Activated naive CD4-positive, alpha-beta T cell treated with anti-CD3 and anti-CD28 coated beads for 36 hours (primary cell): ENCODE measurements at regions of chr12 and their contacts with region 1.

Region 1: DNA sequence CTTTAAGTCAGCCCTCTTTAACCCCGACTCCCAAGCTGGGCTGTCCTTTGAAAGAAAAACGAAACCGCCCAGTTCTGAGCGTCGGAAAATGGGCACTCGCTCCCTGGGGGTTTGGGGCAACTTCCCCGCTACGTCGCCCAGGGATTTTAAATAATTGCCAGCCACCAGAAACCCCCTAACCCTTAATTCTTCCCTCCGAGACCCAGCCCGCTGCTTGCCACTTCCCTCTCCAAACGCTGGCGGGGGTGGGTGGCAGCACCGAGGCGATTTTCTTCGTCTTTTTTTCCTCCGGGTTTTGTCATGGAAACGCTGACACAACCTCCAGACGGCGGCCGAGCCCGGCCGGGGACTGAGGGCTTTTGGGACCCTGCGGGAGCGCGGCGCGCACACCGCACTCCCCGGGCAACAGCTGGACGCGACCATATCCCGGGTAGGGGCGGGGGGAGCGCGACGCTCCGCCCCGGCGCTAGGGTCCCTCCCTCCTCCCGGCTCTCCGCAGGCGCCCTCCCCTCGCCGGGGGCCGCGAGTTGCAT is at the start of gene CHST11:
- DNase-seq: peak; percentile 86
- H3K4me3 Mint-ChIP-seq: peak within 1 kb of the TSS; percentile 97
- H3K27ac Mint-ChIP-seq: peak within 1 kb of the TSS; percentile 94
- H3K4me1 Mint-ChIP-seq: peaks cover 28% of the 10 kb centered on the region
- H3K27me3 Mint-ChIP-seq: peaks cover 2% of the 10 kb centered on the region
- total RNA-seq, gene CHST11: 39.3 to 45.3 TPM

Region 2: DNA sequence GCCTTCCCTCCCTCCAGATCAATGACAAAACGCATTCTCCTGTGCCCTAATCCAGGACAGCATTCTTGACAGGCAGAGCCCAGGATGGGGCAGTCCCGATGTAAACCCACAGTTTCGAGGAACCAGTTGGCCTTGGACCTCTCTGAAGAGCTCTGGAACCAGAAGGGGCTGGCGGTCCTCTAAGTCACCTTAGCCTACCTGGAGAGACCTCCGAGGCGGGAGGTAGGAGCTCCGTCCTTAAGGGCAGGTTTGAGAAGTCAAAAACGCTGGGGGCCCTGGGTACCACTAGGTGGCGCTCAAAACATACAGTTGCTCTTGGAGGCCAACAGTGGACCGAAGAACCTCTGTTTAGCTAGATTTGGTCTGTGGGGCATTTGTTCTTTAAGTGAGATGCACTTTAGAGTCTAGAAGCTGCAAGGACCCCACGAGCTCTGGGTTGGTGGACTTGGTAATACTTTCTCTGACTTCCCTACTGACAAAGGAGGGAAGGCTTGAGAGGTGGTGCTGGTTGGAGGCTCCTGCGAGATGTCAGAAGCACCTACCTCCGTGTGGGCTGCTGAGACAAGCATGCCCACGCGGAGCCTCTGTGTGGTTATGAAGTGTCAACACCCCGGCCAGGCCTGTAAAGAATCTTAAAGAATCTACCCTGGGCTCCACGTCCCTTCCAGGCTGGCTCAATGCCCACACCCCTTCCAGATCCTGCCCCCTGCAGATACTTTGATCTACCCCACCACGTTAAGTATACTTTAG is 74.6 kb before region 1 on chr12:
- CTCF ChIA-PET with region 1: interaction called, 6 read pairs
- intact Hi-C with region 1: loop called (anchors 1 kb)
- DNase-seq: peak; percentile 91
- H3K4me3 Mint-ChIP-seq: no peak overlapping the region
- H3K27ac Mint-ChIP-seq: no peak overlapping the region
- H3K4me1 Mint-ChIP-seq: peaks cover 10% of the 10 kb centered on the region
- H3K27me3 Mint-ChIP-seq: no peaks in the 10 kb centered on the region

Region 3: GRCh38 chr12:104427011-104427461 is 29.4 kb before region 1 on chr12:
- CTCF ChIA-PET with region 1: no interaction called
- intact Hi-C with region 1: no loop called
- DNase-seq: no peak
- H3K4me3 Mint-ChIP-seq: no peak overlapping the region
- H3K27ac Mint-ChIP-seq: no peak overlapping the region
- H3K4me1 Mint-ChIP-seq: peaks cover 4% of the 10 kb centered on the region
- H3K27me3 Mint-ChIP-seq: no peaks in the 10 kb centered on the region

Region 4: DNA sequence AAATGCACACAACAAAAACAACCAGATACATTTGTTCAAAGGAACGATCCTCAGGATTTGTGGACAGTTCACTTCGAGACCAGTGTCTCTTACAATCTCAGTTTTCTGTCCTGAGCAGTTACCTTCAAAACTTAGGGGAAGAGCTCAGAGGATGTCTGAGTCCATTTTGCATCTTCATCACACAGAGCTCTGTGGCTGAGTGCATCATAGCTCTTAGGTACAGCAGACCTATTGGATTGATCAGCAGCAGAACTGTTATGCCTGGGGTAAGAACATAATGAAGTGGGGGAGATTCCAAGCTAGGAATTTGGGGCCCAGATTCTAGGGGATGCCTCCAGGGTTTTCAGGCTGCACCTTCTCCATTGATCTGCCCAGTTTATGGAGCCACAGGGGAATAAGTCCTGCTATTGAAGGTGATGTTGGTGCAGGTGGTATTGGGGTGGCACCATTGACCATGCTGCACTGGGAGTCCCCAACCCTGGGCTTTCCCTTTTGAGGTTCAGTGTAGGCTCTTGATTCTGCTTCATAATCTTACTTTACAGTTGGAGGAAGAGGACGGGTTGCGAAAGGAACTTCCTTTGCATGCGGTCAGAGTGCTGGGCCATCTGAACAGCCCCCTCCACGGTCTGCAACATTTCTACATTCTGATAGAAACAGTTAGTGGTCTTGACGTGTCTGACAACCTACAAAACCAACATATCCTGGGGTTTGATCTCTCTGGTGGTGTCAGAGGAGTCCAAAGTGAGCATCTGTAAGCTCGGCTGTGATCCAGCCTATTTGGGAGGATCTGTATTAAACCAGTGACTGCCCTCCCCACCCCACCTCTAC is 113.1 kb after region 1 on chr12:
- CTCF ChIA-PET with region 1: interaction called, 3 read pairs
- intact Hi-C with region 1: loop called (anchors 1 kb)
- DNase-seq: peak; percentile 64
- H3K4me3 Mint-ChIP-seq: no peak overlapping the region
- H3K27ac Mint-ChIP-seq: peak overlapping the region; percentile 17
- H3K4me1 Mint-ChIP-seq: peaks cover 49% of the 10 kb centered on the region
- H3K27me3 Mint-ChIP-seq: no peaks in the 10 kb centered on the region

Region 5: DNA sequence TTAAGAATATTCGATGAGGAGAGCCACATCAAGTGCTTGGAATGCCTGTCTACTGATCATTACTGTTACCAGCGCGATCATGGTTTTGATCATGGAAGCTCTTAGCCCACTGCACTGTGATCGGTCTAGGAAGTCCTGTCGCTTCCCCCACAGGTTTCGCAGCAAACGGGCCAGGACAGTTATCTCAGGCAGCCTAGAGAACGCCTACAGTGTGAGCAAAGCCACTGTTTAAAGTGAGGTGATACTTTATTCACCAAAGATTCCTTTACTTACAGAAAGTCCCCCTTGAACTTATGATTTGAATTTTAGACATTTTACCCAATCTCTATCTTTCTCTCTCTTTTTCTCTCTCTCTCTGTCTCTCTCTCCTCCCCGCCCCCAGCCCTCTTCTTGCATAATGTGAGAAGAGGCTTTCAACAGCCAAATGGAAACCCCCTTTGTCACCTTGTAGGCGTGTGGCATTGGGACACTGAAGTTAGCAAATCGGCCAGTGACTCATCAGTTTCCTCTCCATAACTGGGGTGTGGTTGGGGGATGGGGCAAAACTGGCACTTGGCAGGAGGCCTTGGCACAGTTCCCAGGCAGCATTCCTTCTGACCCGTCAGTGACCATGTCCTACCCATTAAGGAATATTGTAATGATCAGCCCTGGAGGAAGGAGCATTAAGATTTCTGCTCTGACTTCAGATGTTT is 215.1 kb after region 1 on chr12:
- CTCF ChIA-PET with region 1: interaction called, 9 read pairs
- intact Hi-C with region 1: loop called (anchors 1 kb)
- DNase-seq: peak; percentile 98
- H3K4me3 Mint-ChIP-seq: peak overlapping the region; percentile 42
- H3K27ac Mint-ChIP-seq: peak overlapping the region; percentile 97
- H3K4me1 Mint-ChIP-seq: peaks cover 46% of the 10 kb centered on the region
- H3K27me3 Mint-ChIP-seq: no peaks in the 10 kb centered on the region

Region 6: GRCh38 chr12:104764225-104765091 is 308.0 kb after region 1 on chr12:
- CTCF ChIA-PET with region 1: no interaction called
- intact Hi-C with region 1: loop called (anchors 2 kb)
- DNase-seq: peak; percentile 44
- H3K4me3 Mint-ChIP-seq: no peak overlapping the region
- H3K27ac Mint-ChIP-seq: no peak overlapping the region
- H3K4me1 Mint-ChIP-seq: peaks cover 23% of the 10 kb centered on the region
- H3K27me3 Mint-ChIP-seq: no peaks in the 10 kb centered on the region

Region 7: GRCh38 chr12:104877123-104877705 is 420.7 kb after region 1 on chr12:
- CTCF ChIA-PET with region 1: no interaction called
- intact Hi-C with region 1: loop called (anchors 2 kb)
- DNase-seq: peak; percentile 59
- H3K4me3 Mint-ChIP-seq: no peak overlapping the region
- H3K27ac Mint-ChIP-seq: no peak overlapping the region
- H3K4me1 Mint-ChIP-seq: peaks cover 3% of the 10 kb centered on the region
- H3K27me3 Mint-ChIP-seq: peaks cover 2% of the 10 kb centered on the region

Region 8: GRCh38 chr12:104958009-104958945 is 501.8 kb after region 1 on chr12 and contains the start of gene SLC41A2:
- CTCF ChIA-PET with region 1: no interaction called
- intact Hi-C with region 1: loop called (anchors 2 kb)
- DNase-seq: peak; percentile 85
- H3K4me3 Mint-ChIP-seq: peak within 1 kb of the TSS; percentile 84
- H3K27ac Mint-ChIP-seq: peak within 1 kb of the TSS; percentile 72
- H3K4me1 Mint-ChIP-seq: peaks cover 19% of the 10 kb centered on the region
- H3K27me3 Mint-ChIP-seq: peaks cover 14% of the 10 kb centered on the region
- total RNA-seq, gene SLC41A2: 2.7 to 3.5 TPM

Region 9: DNA sequence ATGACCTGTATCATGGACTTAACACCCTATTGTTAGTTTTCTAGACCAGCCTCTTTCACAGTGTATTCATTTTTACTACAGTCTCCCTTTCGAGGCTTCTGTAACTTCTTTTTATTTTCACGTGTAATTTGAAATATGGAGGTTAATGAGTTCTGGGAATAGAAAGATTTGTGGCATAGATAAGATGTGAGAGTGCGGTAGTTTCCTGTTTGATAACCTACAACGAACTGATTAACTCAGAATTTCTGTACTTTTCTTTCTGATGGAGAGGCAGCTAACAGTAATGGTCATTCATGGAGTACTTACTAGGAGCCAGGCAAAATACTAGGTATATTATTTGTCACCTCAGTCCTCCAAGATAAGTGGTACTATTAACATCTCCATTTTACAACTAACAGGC is 1922.3 kb after region 1 on chr12:
- CTCF ChIA-PET with region 1: no interaction called
- intact Hi-C with region 1: no loop called
- DNase-seq: no peak
- H3K4me3 Mint-ChIP-seq: no peak overlapping the region
- H3K27ac Mint-ChIP-seq: no peak overlapping the region
- H3K4me1 Mint-ChIP-seq: peaks cover 11% of the 10 kb centered on the region
- H3K27me3 Mint-ChIP-seq: no peaks in the 10 kb centered on the region